Endothelial cell of umbilical vein (primary cell): ENCODE measurements at regions of chr6 and their contacts with region 1.

Region 1: DNA sequence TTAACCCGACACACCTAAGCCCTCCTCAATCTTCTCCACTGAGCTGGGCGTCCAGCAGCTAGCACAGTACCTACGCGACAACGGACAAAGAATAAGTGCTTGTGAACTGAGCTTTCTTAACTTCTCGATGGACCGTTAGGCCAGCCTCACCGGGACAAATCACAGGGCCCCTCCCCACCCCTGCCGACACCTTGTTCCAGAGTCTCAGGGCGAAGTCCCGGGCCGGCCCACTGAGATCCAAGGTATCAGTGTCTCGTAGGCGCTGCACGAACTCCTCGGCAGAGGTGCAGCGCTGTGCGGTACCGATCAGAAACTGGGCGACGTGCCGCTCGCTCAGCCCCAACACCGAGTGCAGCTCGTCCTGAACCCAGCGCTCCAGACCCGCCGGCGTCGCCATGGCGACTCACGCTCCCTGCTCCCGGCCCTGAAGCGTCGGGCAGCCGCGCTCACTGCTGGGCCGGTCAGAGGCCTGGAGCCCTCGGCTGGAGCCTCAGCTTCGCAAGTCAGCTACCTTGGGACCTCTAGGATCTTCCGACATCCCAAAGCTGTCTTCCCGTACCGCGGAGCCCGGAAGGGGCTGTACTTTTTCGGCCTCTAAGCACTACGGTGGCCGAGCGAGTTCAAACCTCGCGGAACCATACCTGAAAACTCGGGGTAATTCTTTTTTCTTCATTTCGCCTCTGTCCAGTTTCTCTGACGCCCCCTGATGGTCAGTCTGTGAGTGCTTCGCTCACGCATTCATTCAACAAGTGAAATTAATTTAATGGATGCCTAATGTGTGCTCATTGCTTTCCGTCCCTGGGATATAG is at the start of gene DHX16:
- DNase-seq: peak; percentile 97
- H3K4me3 ChIP-seq: peak within 1 kb of the TSS; percentile 38 to 82 (median 73)
- H3K27ac ChIP-seq: peak within 1 kb of the TSS; percentile 11
- H3K4me1 ChIP-seq: peaks cover 6% of the 10 kb centered on the region
- H3K27me3 ChIP-seq: no peaks in the 10 kb centered on the region
- CTCF ChIP-seq: peak; percentile 84 to 93
- POLR2A ChIP-seq: peak; percentile 85
- total RNA-seq, gene DHX16: 36.3 and 38.2 TPM in 2 replicates

Region 2: DNA sequence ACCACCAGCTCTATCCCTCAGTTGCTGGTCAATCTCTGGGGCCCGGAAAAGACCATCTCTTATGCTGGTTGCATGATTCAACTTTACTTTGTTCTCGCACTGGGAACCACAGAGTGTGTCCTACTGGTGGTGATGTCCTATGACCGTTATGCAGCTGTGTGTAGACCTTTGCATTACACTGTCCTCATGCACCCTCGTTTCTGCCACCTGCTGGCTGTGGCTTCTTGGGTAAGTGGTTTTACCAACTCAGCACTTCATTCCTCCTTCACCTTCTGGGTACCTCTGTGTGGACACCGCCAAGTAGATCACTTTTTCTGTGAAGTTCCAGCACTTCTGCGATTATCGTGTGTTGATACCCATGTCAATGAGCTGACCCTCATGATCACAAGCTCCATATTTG is 1560.5 kb before region 1 on chr6:
- CTCF ChIA-PET with region 1: no interaction called
- POLR2A ChIA-PET with region 1: no interaction called
- dilution Hi-C with region 1: no loop called
- intact Hi-C with region 1: no loop called
- DNase-seq: no peak
- H3K4me3 ChIP-seq: no peak overlapping the region
- H3K27ac ChIP-seq: no peak overlapping the region
- H3K4me1 ChIP-seq: no peaks in the 10 kb centered on the region
- H3K27me3 ChIP-seq: no peaks in the 10 kb centered on the region
- CTCF ChIP-seq: no peak
- POLR2A ChIP-seq: no peak

Region 3: DNA sequence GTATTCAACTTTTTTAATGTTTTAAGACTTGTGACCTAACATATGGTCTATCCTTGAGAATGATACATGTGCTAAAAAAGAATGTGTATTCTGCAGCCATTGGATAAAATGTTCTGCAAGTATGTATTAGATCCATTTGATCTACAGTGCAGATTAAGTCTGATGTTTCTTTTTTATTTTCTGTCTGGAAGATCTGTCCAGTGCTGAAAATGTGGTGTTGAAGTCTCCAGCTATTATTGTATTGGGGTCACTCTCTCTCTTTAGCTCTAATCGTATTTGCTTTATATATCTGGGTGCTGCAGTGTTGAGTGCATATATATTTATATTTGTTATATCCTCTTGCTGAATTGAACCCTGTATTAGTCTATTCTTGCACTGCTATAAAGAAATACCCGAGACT is 390.1 kb before region 1 on chr6:
- CTCF ChIA-PET with region 1: no interaction called
- POLR2A ChIA-PET with region 1: no interaction called
- dilution Hi-C with region 1: no loop called
- intact Hi-C with region 1: no loop called
- DNase-seq: no peak
- H3K4me3 ChIP-seq: no peak overlapping the region
- H3K27ac ChIP-seq: no peak overlapping the region
- H3K4me1 ChIP-seq: no peaks in the 10 kb centered on the region
- H3K27me3 ChIP-seq: no peaks in the 10 kb centered on the region
- CTCF ChIP-seq: no peak
- POLR2A ChIP-seq: no peak

Region 4: GRCh38 chr6:30646458-30647241 is 26.0 kb before region 1 on chr6 and contains the start of gene C6orf136:
- CTCF ChIA-PET with region 1: interaction called, 5 read pairs
- POLR2A ChIA-PET with region 1: no interaction called
- dilution Hi-C with region 1: no loop called
- intact Hi-C with region 1: loop called (anchors 1 kb)
- DNase-seq: peak; percentile 93
- H3K4me3 ChIP-seq: peak within 1 kb of the TSS; percentile 70 to 99 (median 76)
- H3K27ac ChIP-seq: peak within 1 kb of the TSS; percentile 26
- H3K4me1 ChIP-seq: peaks cover 8% of the 10 kb centered on the region
- H3K27me3 ChIP-seq: no peaks in the 10 kb centered on the region
- CTCF ChIP-seq: no peak
- POLR2A ChIP-seq: no peak
- total RNA-seq, gene C6orf136: 18.5 and 21.0 TPM in 2 replicates

Region 5: GRCh38 chr6:30686908-30687658 is 14.4 kb after region 1 on chr6:
- CTCF ChIA-PET with region 1: interaction called, 25 read pairs
- POLR2A ChIA-PET with region 1: interaction called, 6 read pairs
- dilution Hi-C with region 1: no loop called
- intact Hi-C with region 1: no loop called
- DNase-seq: peak; percentile 93
- H3K4me3 ChIP-seq: peak overlapping the region; percentile 76 to 92 (median 81)
- H3K27ac ChIP-seq: peak overlapping the region; percentile 93
- H3K4me1 ChIP-seq: peaks cover 33% of the 10 kb centered on the region
- H3K27me3 ChIP-seq: no peaks in the 10 kb centered on the region
- CTCF ChIP-seq: no peak
- POLR2A ChIP-seq: peak; percentile 96

Region 6: GRCh38 chr6:30857549-30857948 is 184.9 kb after region 1 on chr6:
- CTCF ChIA-PET with region 1: no interaction called
- POLR2A ChIA-PET with region 1: no interaction called
- dilution Hi-C with region 1: no loop called
- intact Hi-C with region 1: no loop called
- DNase-seq: no peak
- H3K4me3 ChIP-seq: no peak overlapping the region
- H3K27ac ChIP-seq: no peak overlapping the region
- H3K4me1 ChIP-seq: no peaks in the 10 kb centered on the region
- H3K27me3 ChIP-seq: peaks cover 10 to 15% of the 10 kb centered on the region in 2 experiments
- CTCF ChIP-seq: no peak
- POLR2A ChIP-seq: no peak

Region 7: GRCh38 chr6:31474871-31475286 is 802.2 kb after region 1 on chr6:
- CTCF ChIA-PET with region 1: no interaction called
- POLR2A ChIA-PET with region 1: no interaction called
- dilution Hi-C with region 1: no loop called
- intact Hi-C with region 1: no loop called
- DNase-seq: no peak
- H3K4me3 ChIP-seq: no peak overlapping the region
- H3K27ac ChIP-seq: no peak overlapping the region
- H3K4me1 ChIP-seq: no peaks in the 10 kb centered on the region
- H3K27me3 ChIP-seq: peaks cover 6 to 18% of the 10 kb centered on the region in 2 experiments
- CTCF ChIP-seq: peak in 1 of 2 donors; percentile 27
- POLR2A ChIP-seq: no peak